ENCODE measurements at regions of chr5 and their contacts with region 1.

Region 1: GRCh38 chr5:80407735-80408482 is at the start of gene ZFYVE16:
- DNase-seq: peak; percentile 95
- ATAC-seq: peak; percentile 84
- H3K4me3 Mint-ChIP-seq: peak within 1 kb of the TSS; percentile 91
- H3K27ac Mint-ChIP-seq: peak within 1 kb of the TSS; percentile 95
- H3K4me1 Mint-ChIP-seq: peaks cover 17% of the 10 kb centered on the region
- H3K27me3 Mint-ChIP-seq: no peaks in the 10 kb centered on the region
- CTCF ChIP-seq: no peak
- total RNA-seq, gene ZFYVE16: 19.8 and 21.1 TPM in 2 replicates

Region 2: DNA sequence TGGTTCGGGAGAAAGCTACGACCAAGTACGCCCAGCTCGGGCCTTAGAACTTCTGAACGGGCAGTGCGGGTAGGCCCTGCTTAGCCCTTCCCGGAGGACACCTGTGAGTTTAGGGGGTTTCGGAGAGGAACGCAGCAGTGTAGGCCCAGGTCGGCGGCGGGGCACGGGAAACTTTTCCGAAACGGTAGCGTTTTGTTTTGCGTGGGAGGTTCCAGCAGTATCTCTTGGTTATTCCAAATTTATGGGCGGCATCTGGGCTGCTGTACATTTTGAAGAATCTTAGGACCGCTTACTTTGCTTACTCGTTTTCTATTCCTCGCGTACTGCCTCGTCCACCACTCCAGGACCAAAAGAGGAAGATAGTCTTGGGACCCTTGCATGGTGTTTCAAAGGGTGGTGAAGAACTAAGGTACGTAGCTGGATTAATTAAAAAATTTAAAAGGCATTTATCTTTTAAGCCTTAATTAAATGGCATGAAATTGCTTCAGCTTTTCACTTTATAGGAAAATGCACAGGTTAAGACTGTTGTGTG is 795.2 kb before region 1 on chr5:
- CTCF ChIA-PET with region 1: no interaction called
- POLR2A ChIA-PET with region 1: no interaction called
- intact Hi-C with region 1: loop called (anchors 5 kb)
- DNase-seq: no peak
- ATAC-seq: peak; percentile 16
- H3K4me3 Mint-ChIP-seq: peak overlapping the region; percentile 99
- H3K27ac Mint-ChIP-seq: peak overlapping the region; percentile 98
- H3K4me1 Mint-ChIP-seq: peaks cover 34% of the 10 kb centered on the region
- H3K27me3 Mint-ChIP-seq: peaks cover 2% of the 10 kb centered on the region
- CTCF ChIP-seq: no peak

Region 3: DNA sequence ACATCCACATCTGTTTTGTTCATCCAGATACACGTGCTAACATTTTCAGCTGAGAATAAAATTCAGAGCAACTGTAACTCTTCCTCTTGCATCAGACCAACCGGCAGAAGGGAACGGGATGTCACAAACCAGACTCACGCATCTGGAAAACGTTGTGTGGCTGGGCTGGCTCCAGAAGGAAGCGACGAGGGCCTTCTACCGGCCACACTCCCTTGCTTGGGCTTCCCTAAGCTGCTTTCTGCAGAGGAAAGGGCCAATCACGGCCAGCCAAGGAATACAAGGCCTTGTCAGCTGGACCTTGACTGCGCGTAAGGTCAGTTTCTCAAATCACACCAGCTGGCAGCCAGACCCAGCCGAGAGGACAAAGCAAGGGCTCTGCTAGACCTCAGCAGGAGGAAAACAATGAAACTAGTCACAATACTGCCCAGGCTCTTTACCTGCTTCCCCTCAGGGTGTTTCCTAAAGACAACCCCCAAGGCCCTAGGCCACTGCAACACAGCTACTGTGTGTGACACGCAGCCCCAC is 266.7 kb before region 1 on chr5:
- CTCF ChIA-PET with region 1: no interaction called
- POLR2A ChIA-PET with region 1: no interaction called
- intact Hi-C with region 1: no loop called
- DNase-seq: no peak
- ATAC-seq: no peak
- H3K4me3 Mint-ChIP-seq: no peak overlapping the region
- H3K27ac Mint-ChIP-seq: no peak overlapping the region
- H3K4me1 Mint-ChIP-seq: peaks cover 39% of the 10 kb centered on the region
- H3K27me3 Mint-ChIP-seq: no peaks in the 10 kb centered on the region
- CTCF ChIP-seq: no peak

Region 4: DNA sequence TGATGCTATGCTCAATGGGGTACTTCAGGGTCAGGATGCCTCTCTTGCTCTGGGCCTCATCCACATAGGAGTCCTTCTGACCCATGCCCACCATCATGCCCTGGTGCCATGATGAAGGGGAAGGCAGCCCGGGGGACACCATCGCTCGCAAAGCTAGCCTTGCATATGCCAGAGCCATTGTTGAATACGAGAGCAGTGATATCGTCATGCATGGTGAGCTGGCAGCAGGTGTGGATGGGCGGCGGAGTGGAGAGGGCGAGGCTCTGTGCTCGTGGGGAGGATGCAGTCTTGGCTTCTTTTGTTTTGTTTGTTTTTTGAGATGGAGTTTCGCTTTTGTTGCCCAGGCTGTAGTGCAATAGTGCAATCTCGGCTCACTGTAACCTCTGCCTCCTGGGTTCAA is 105.3 kb before region 1 on chr5:
- CTCF ChIA-PET with region 1: no interaction called
- POLR2A ChIA-PET with region 1: no interaction called
- intact Hi-C with region 1: no loop called
- DNase-seq: no peak
- ATAC-seq: no peak
- H3K4me3 Mint-ChIP-seq: no peak overlapping the region
- H3K27ac Mint-ChIP-seq: no peak overlapping the region
- H3K4me1 Mint-ChIP-seq: no peaks in the 10 kb centered on the region
- H3K27me3 Mint-ChIP-seq: no peaks in the 10 kb centered on the region
- CTCF ChIP-seq: no peak

Region 5: DNA sequence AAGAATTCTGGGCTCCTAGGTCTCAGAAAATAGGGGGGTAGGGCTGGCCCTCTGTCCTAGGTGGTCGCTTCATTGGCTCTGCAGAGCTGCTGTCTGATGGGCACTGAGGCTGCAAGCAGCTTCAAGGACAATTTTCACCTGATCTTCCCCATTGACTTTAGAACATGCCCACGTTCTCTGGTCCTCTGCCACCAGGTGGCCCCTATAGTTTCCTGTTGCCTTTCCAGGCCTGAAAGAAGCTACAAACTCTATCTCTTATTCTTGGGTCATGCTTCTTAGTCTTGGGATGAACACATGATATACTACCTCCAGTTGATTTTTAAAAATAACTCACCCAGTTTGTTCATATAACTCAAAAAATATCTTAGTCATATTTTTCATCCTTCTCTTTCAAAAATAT is 61.9 kb before region 1 on chr5:
- CTCF ChIA-PET with region 1: interaction called, 5 read pairs
- POLR2A ChIA-PET with region 1: no interaction called
- intact Hi-C with region 1: loop called (anchors 1 kb)
- DNase-seq: no peak
- ATAC-seq: peak; percentile 57
- H3K4me3 Mint-ChIP-seq: no peak overlapping the region
- H3K27ac Mint-ChIP-seq: no peak overlapping the region
- H3K4me1 Mint-ChIP-seq: no peaks in the 10 kb centered on the region
- H3K27me3 Mint-ChIP-seq: no peaks in the 10 kb centered on the region
- CTCF ChIP-seq: no peak

Region 6: DNA sequence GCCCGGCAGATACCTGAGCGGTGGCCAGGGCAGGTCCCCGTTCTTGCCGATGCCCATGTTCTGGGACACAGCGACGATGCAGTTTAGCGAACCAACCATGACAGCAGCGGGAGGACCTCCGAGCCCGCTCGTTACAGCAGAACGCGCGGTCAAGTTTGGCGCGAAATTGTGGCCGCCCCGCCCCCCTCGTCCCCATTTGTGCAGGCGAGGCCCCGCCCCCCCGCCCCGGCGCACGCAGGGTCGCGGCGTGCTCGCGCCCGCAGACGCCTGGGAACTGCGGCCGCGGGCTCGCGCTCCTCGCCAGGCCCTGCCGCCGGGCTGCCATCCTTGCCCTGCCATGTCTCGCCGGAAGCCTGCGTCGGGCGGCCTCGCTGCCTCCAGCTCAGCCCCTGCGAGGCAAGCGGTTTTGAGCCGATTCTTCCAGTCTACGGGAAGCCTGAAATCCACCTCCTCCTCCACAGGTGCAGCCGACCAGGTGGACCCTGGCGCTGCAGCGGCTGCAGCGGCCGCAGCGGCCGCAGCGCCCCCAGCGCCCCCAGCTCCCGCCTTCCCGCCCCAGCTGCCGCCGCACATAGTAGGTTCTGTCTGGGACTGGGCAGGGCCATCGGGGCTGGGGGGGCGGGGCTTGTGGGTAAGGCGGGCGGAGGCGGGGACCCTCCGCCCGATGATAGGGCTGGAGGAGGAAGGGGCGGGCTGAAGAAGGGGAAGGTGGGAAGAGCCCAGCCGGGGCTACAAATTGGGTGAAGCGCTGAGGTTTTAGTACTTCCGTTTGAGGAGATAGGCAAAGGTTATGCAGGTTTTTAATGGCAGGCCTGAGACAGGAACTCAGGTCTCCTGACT is 246.7 kb after region 1 on chr5 and contains the starts of genes DHFR and MSH3:
- CTCF ChIA-PET with region 1: no interaction called
- POLR2A ChIA-PET with region 1: interaction called, 6 read pairs
- intact Hi-C with region 1: loop called (anchors 1 kb)
- DNase-seq: peak; percentile 79
- ATAC-seq: peak; percentile 73
- H3K4me3 Mint-ChIP-seq: peak within 1 kb of the TSS; percentile 97
- H3K27ac Mint-ChIP-seq: peak within 1 kb of the TSS; percentile 99
- H3K4me1 Mint-ChIP-seq: peaks cover 26% of the 10 kb centered on the region
- H3K27me3 Mint-ChIP-seq: no peaks in the 10 kb centered on the region
- CTCF ChIP-seq: no peak
- total RNA-seq, gene DHFR: 11.1 and 12.7 TPM in 2 replicates
- total RNA-seq, gene MSH3: 22.9 and 24.0 TPM in 2 replicates